CD8-positive, alpha-beta T cell (primary cell): ENCODE measurements at regions of chr9 and their contacts with region 1.

Region 1: GRCh38 chr9:20749496-20750198 is 65.6 kb downstream of the FOCAD start:
- DNase-seq: no peak
- ATAC-seq: no peak
- H3K4me3 ChIP-seq: no peak overlapping the region
- H3K4me3 Mint-ChIP-seq: no peak overlapping the region
- H3K27ac ChIP-seq: no peak overlapping the region
- H3K27ac Mint-ChIP-seq: no peak overlapping the region
- H3K4me1 ChIP-seq: no peaks in the 10 kb centered on the region
- H3K4me1 Mint-ChIP-seq: no peaks in the 10 kb centered on the region
- H3K27me3 ChIP-seq: no peaks in the 10 kb centered on the region
- H3K27me3 Mint-ChIP-seq: no peaks in the 10 kb centered on the region
- CTCF ChIP-seq: no peak

Region 2: GRCh38 chr9:20707708-20708107 is 41.9 kb before region 1 on chr9:
- CTCF ChIA-PET with region 1: no interaction called
- POLR2A ChIA-PET with region 1: no interaction called
- intact Hi-C with region 1: loop called in 1 of 2 experiments (anchors 5 kb)
- DNase-seq: no peak
- ATAC-seq: no peak
- H3K4me3 ChIP-seq: no peak overlapping the region
- H3K4me3 Mint-ChIP-seq: no peak overlapping the region
- H3K27ac ChIP-seq: no peak overlapping the region
- H3K27ac Mint-ChIP-seq: no peak overlapping the region
- H3K4me1 ChIP-seq: no peaks in the 10 kb centered on the region
- H3K4me1 Mint-ChIP-seq: no peaks in the 10 kb centered on the region
- H3K27me3 ChIP-seq: no peaks in the 10 kb centered on the region
- H3K27me3 Mint-ChIP-seq: no peaks in the 10 kb centered on the region
- CTCF ChIP-seq: no peak

Region 3: DNA sequence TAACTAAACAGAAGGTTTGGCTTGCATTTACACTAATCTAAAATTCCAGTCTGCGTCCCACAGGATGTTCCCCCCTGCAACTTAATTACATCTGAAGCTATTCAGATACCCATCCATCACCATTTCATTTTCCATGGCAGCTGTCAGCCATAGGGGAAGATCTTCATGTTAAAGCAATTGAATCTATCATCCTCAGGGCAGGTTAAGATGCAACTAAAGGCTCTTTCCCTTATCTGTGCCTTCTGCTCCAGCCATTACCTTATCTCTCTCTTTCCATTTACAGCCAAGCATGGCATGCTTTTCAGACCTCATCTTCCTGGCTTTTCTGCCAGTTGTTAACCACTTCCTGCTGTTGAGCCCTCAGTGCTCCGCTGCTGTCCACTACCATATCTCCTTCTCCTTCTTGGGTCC is 297.6 kb after region 1 on chr9:
- CTCF ChIA-PET with region 1: no interaction called
- POLR2A ChIA-PET with region 1: no interaction called
- intact Hi-C with region 1: no loop called
- DNase-seq: no peak
- ATAC-seq: no peak
- H3K4me3 ChIP-seq: no peak overlapping the region
- H3K4me3 Mint-ChIP-seq: no peak overlapping the region
- H3K27ac ChIP-seq: no peak overlapping the region
- H3K27ac Mint-ChIP-seq: no peak overlapping the region
- H3K4me1 ChIP-seq: no peaks in the 10 kb centered on the region
- H3K4me1 Mint-ChIP-seq: peaks cover 4% of the 10 kb centered on the region
- H3K27me3 ChIP-seq: no peaks in the 10 kb centered on the region
- H3K27me3 Mint-ChIP-seq: no peaks in the 10 kb centered on the region
- CTCF ChIP-seq: no peak